Activated naive CD4-positive, alpha-beta T cell treated with anti-CD3 and anti-CD28 coated beads for 36 hours (primary cell): ENCODE measurements at regions of chr17 and their contacts with region 1.

Region 1: DNA sequence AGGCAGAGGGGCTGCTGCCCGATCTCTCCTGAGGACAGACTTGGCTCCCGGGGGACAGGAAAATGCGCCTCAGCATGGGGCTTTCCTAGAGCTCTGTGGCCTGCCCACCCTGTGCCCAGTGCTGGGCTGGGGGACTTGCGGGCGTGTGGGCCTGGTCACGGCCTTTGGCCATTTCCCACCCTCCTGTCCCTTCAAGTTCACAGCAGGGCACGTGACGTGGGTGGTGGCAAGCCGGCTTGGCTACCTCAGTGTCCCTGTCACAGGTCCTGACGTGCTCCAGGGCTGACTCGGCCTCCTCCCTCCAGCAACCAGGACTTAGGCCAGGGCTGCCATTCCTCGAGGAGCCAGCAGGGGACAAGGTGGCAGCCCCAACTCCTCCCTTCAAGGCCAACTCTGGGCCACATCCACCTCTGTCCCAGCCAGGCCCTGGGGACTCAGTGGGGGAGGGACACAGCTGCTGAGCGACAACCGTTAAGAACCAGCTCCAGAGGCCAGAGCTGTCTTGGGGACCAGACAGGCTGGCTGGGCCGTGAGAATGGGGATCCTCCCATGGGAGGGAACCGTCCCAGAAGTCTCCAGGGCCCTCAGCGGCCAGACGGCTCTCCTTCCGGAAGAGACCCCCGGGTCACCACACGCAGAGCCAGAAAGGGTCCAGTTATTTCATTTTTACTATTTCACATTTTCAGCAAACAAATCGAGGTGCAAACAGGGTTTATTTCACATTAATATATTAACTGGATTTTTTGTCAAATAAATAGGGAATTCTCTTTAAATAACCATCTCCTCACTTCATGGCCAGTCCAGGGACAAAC is 1.1 kb upstream of the UNC13D start:
- DNase-seq: peak; percentile 76
- H3K4me3 Mint-ChIP-seq: peak overlapping the region; percentile 95
- H3K27ac Mint-ChIP-seq: peak overlapping the region; percentile 72
- H3K4me1 Mint-ChIP-seq: peaks cover 22% of the 10 kb centered on the region
- H3K27me3 Mint-ChIP-seq: no peaks in the 10 kb centered on the region

Region 2: GRCh38 chr17:75764711-75765421 is 80.4 kb before region 1 on chr17 and contains the start of gene GALK1:
- CTCF ChIA-PET with region 1: interaction called, 13 read pairs
- intact Hi-C with region 1: no loop called
- DNase-seq: peak; percentile 82
- H3K4me3 Mint-ChIP-seq: peak within 1 kb of the TSS; percentile 84
- H3K27ac Mint-ChIP-seq: peak within 1 kb of the TSS; percentile 79
- H3K4me1 Mint-ChIP-seq: peaks cover 10% of the 10 kb centered on the region
- H3K27me3 Mint-ChIP-seq: no peaks in the 10 kb centered on the region
- total RNA-seq, gene GALK1: 48.7 to 50.2 TPM

Region 3: GRCh38 chr17:75827252-75828115 is 17.8 kb before region 1 on chr17:
- CTCF ChIA-PET with region 1: interaction called, 23 read pairs
- intact Hi-C with region 1: no loop called
- DNase-seq: peak; percentile 75
- H3K4me3 Mint-ChIP-seq: peak overlapping the region; percentile 29
- H3K27ac Mint-ChIP-seq: peak overlapping the region; percentile 80
- H3K4me1 Mint-ChIP-seq: peaks cover 18% of the 10 kb centered on the region
- H3K27me3 Mint-ChIP-seq: no peaks in the 10 kb centered on the region

Region 4: GRCh38 chr17:75861927-75862317 is 16.7 kb after region 1 on chr17:
- CTCF ChIA-PET with region 1: interaction called, 11 read pairs
- intact Hi-C with region 1: no loop called
- DNase-seq: no peak
- H3K4me3 Mint-ChIP-seq: no peak overlapping the region
- H3K27ac Mint-ChIP-seq: no peak overlapping the region
- H3K4me1 Mint-ChIP-seq: peaks cover 33% of the 10 kb centered on the region
- H3K27me3 Mint-ChIP-seq: no peaks in the 10 kb centered on the region

Region 5: DNA sequence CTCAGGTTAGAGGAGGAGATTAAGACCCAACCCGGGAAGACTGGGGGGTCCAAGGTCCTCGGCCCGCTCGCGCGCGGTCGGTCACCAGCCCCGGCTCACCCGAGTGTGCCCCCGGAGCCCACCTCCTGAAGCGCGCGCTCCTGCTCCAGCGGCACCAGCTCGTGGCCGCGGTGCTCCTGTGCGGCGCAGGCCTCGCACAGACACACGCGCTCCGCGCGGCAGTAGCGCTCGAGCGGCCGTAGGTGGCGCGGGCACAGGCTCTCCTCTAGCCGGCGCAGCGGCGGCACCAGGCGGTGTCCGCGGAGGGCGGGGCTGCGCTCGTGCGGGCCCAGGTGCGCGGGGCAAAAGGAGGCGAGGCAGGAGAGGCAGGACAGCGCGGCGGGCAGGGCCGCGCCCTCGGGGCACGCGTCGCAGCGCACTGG is 32.5 kb after region 1 on chr17:
- CTCF ChIA-PET with region 1: interaction called, 10 read pairs
- intact Hi-C with region 1: loop called (anchors 1 kb)
- DNase-seq: peak; percentile 74
- H3K4me3 Mint-ChIP-seq: peak overlapping the region; percentile 93
- H3K27ac Mint-ChIP-seq: peak overlapping the region; percentile 83
- H3K4me1 Mint-ChIP-seq: peaks cover 32% of the 10 kb centered on the region
- H3K27me3 Mint-ChIP-seq: peaks cover 3% of the 10 kb centered on the region